Naive thymus-derived CD4-positive, alpha-beta T cell (primary cell): ENCODE measurements at regions of chr7 and their contacts with region 1.

Region 1: DNA sequence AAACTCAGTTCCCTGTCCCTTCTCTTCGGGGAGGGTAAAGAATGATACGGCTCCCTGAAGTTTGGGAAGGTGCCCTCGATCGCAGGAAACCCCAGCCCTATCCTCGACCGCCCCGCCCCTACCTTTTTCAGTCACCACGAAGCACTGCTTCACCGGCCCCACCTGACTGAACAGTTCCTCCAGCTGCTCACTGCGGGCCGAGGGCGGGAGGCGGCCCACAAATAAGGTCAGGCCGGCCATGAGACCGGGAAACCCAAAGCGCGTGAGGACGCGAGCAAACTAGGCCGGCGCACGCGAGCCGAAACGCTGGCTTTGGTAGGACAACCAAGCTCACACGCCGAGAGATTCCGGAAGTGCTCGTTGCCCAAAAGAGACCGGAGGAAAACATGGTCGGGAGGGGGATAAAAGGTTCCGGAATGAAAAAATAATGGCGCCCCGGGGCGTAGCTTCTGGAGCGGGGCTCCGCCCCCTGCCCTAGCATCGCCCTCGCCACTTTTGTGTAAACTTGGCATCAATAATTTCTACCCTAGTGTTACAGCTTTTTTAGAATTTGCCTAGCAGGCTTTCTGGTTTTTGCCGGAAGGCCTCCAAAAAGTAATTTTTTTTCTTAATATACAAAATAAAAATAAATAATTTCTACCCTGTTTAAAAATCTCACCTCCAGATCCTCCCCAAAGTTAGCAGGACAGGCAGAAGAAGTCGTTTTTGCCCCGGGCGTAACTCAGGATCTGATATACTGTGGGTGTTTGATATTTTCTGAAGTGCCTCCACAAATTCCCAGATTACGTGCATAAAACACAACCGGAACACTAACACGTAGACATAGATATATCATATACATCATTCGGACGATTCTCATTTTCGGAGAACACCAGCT is at the start of gene RBM28:
- DNase-seq: peak; percentile 80 to 93 (median 90)
- ATAC-seq: peak; percentile 98
- H3K4me3 ChIP-seq: peak within 1 kb of the TSS; percentile 97
- H3K4me3 Mint-ChIP-seq: peak within 1 kb of the TSS; percentile 89 to 98 (median 96)
- H3K27ac ChIP-seq: peak within 1 kb of the TSS; percentile 83
- H3K27ac Mint-ChIP-seq: peak within 1 kb of the TSS; percentile 83 to 96 (median 93)
- H3K4me1 ChIP-seq: peaks cover 16 to 20% of the 10 kb centered on the region in 2 donors
- H3K4me1 Mint-ChIP-seq: peaks cover 19 to 44% (median 34%) of the 10 kb centered on the region in 7 donors
- H3K27me3 ChIP-seq: no peaks in the 10 kb centered on the region
- H3K27me3 Mint-ChIP-seq: peaks cover 0 to 15% (median 7%) of the 10 kb centered on the region in 5 donors
- total RNA-seq, gene RBM28: 30.1 to 51.0 (median 43.5) TPM

Region 2: GRCh38 chr7:128287556-128287955 is 56.2 kb before region 1 on chr7:
- CTCF ChIA-PET with region 1: no interaction called
- POLR2A ChIA-PET with region 1: no interaction called
- intact Hi-C with region 1: no loop called
- DNase-seq: no peak
- ATAC-seq: no peak
- H3K4me3 ChIP-seq: no peak overlapping the region
- H3K4me3 Mint-ChIP-seq: no peak overlapping the region
- H3K27ac ChIP-seq: no peak overlapping the region
- H3K27ac Mint-ChIP-seq: no peak overlapping the region
- H3K4me1 ChIP-seq: no peaks in the 10 kb centered on the region
- H3K4me1 Mint-ChIP-seq: no peaks in the 10 kb centered on the region
- H3K27me3 ChIP-seq: no peaks in the 10 kb centered on the region
- H3K27me3 Mint-ChIP-seq: no peaks in the 10 kb centered on the region

Region 3: GRCh38 chr7:128361411-128362379 is 17.9 kb after region 1 on chr7 and contains the start of gene PRRT4:
- CTCF ChIA-PET with region 1: interaction called, 7 read pairs
- POLR2A ChIA-PET with region 1: interaction called, 4 read pairs
- intact Hi-C with region 1: loop called (anchors 1 to 2 kb)
- DNase-seq: peak in 8 of 9 donors; percentile 40 to 68 (median 58)
- ATAC-seq: peak; percentile 81
- H3K4me3 ChIP-seq: peak within 1 kb of the TSS; percentile 55
- H3K4me3 Mint-ChIP-seq: peak within 1 kb of the TSS; percentile 75 to 96 (median 88)
- H3K27ac ChIP-seq: no peak within 1 kb of the TSS
- H3K27ac Mint-ChIP-seq: peak within 1 kb of the TSS in 8 of 9 donors; percentile 22 to 89 (median 70)
- H3K4me1 ChIP-seq: peaks cover 0 to 5% of the 10 kb centered on the region in 2 donors
- H3K4me1 Mint-ChIP-seq: peaks cover 11 to 21% (median 15%) of the 10 kb centered on the region in 7 donors
- H3K27me3 ChIP-seq: no peaks in the 10 kb centered on the region
- H3K27me3 Mint-ChIP-seq: peaks cover 36 to 80% (median 39%) of the 10 kb centered on the region in 5 donors
- total RNA-seq, gene PRRT4: 0.49 to 1.1 (median 0.58) TPM in 4 of 5 experiments, not detected in the other

Region 4: DNA sequence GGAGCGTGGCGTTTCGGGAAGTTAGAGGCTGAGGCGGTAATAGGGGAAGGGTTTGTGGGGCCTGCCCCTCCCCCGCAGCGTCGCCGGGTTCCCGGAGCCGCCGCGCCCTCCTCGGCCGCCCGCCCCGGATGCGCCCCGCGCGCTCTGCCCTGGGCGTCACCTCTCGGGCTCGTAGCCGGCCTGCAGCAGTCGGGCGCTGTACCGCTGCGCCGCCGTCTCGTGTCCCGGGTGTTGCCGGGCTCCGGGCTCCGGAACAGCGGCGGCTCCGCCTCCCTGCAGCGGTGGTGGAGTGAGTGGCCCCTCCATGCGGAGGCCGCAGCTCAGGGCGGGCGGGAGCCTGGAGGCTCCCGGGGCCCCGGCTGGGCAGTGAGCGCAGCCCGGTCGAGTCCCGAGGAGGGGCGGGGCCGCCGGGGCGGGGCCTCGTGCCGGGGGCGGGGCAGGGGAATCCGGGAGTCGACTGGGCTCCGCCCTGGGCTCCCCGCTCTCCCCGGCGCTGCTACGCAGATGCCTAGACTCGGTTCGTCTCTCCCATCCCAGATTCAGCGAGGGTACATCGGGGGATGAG is 65.9 kb after region 1 on chr7 and contains the start of gene IMPDH1:
- CTCF ChIA-PET with region 1: no interaction called
- POLR2A ChIA-PET with region 1: interaction called, 8 read pairs
- intact Hi-C with region 1: loop called (anchors 1 kb)
- DNase-seq: peak; percentile 73 to 95 (median 83)
- ATAC-seq: peak; percentile 87
- H3K4me3 ChIP-seq: peak within 1 kb of the TSS; percentile 89
- H3K4me3 Mint-ChIP-seq: peak within 1 kb of the TSS; percentile 88 to 95 (median 92)
- H3K27ac ChIP-seq: peak within 1 kb of the TSS; percentile 81
- H3K27ac Mint-ChIP-seq: peak within 1 kb of the TSS; percentile 87 to 93 (median 90)
- H3K4me1 ChIP-seq: peaks cover 15 to 27% of the 10 kb centered on the region in 2 donors
- H3K4me1 Mint-ChIP-seq: peaks cover 12 to 41% (median 38%) of the 10 kb centered on the region in 7 donors
- H3K27me3 ChIP-seq: no peaks in the 10 kb centered on the region
- H3K27me3 Mint-ChIP-seq: peaks cover 0 to 26% (median 0%) of the 10 kb centered on the region in 5 donors
- total RNA-seq, gene IMPDH1: 36.5 to 92.0 (median 44.4) TPM

Region 5: GRCh38 chr7:128455551-128456254 is 111.9 kb after region 1 on chr7 and contains the start of gene HILPDA:
- CTCF ChIA-PET with region 1: interaction called, 14 read pairs
- POLR2A ChIA-PET with region 1: interaction called, 3 read pairs
- intact Hi-C with region 1: loop called (anchors 1 to 2 kb)
- DNase-seq: peak; percentile 90 to 98 (median 93)
- ATAC-seq: peak; percentile 95
- H3K4me3 ChIP-seq: peak within 1 kb of the TSS; percentile 85
- H3K4me3 Mint-ChIP-seq: peak within 1 kb of the TSS; percentile 81 to 96 (median 92)
- H3K27ac ChIP-seq: peak within 1 kb of the TSS; percentile 83
- H3K27ac Mint-ChIP-seq: peak within 1 kb of the TSS; percentile 72 to 98 (median 89)
- H3K4me1 ChIP-seq: peaks cover 12 to 22% of the 10 kb centered on the region in 2 donors
- H3K4me1 Mint-ChIP-seq: peaks cover 13 to 65% (median 22%) of the 10 kb centered on the region in 7 donors
- H3K27me3 ChIP-seq: no peaks in the 10 kb centered on the region
- H3K27me3 Mint-ChIP-seq: peaks cover 0 to 8% (median 0%) of the 10 kb centered on the region in 5 donors
- total RNA-seq, gene HILPDA: 2.4 to 39.5 (median 4.4) TPM

Region 6: DNA sequence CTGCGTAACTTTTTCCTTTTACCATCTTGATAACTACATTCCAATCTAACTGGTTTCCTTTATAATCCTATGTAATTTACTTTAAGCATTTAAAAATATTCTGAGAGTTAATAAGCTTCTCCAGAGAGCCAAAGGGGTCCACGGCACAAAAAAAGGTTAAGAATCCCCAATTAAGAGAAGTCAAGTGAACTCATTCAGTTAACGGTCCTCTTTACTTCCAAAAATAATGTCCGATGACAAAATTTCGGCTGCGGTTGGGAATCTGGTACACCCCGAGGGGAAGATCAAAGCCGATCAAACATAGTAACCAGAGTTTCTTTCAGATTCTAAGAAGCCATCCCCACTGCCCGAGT is 1707.0 kb after region 1 on chr7:
- CTCF ChIA-PET with region 1: no interaction called
- POLR2A ChIA-PET with region 1: no interaction called
- intact Hi-C with region 1: loop called (anchors 2 to 5 kb)
- DNase-seq: no peak
- ATAC-seq: no peak
- H3K4me3 ChIP-seq: peak overlapping the region; percentile 86
- H3K4me3 Mint-ChIP-seq: peak overlapping the region; percentile 94 to 99 (median 98)
- H3K27ac ChIP-seq: peak overlapping the region; percentile 78
- H3K27ac Mint-ChIP-seq: peak overlapping the region; percentile 90 to 99 (median 95)
- H3K4me1 ChIP-seq: peaks cover 5 to 8% of the 10 kb centered on the region in 2 donors
- H3K4me1 Mint-ChIP-seq: peaks cover 6 to 29% (median 14%) of the 10 kb centered on the region in 7 donors
- H3K27me3 ChIP-seq: no peaks in the 10 kb centered on the region
- H3K27me3 Mint-ChIP-seq: peaks cover 0 to 3% (median 0%) of the 10 kb centered on the region in 5 donors